Left cardiac atrium (tissue), 4 donors: ENCODE measurements at regions of chr1 and their contacts with region 1.

Region 1: DNA sequence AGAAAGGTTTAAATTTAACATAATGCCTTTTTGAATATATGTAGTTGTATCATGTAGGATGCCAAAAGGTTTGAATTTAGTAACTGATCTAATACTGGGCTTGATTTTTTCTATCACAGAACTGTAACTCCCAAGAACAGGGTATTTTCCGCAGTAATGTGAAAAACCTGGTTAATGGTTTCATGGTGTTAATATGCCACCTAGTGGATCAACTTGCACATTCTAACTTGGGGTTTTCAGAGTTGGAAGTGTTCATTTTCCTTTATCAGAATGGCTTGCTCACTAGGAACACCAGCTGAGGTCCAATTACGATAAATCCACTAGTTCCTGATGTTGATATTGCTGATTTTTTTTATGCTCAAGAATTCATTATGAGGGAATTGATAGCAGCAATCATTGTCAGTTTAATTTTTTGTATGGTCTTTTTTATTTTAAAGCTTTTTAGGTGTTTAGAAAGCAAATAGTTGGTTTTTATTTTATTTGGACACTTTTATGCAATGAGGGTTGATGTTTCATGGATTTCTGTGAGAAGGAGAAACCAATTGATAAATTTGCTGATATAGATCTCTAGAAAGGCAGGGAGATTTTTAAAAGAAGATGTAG is 157.2 kb downstream of the PLA2G4A start:
- DNase-seq: no peak
- ATAC-seq: peak; percentile 69 to 74

Region 2: DNA sequence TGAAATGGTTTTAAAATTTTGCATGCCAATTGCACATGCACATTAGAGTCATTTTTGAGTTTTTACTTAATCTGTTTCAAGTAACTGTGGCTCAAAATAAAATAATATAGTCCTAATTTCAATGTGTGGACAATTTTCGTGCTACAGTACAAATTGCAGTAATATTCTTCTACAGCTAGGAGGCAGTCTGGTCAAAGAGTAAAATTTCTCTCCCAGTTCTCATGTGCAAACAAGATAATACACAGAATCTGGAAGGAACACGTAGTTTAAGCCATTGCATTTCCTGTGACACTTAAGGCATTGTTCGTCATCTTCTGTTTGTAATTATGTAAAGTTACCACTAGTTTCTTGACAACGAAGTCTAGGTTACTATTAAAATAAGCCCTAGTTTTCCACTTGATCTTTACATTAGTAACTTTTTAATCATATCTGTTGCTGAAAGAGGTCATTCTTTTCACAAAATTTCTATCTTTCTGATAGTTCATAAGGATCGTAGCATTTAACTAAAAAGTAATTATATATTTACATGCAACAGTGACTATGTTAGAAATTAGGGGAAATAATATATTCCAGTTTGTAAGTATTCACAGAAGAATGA is 581.4 kb before region 1 on chr1:
- intact Hi-C with region 1: loop called in 1 of 2 experiments (anchors 5 kb)
- DNase-seq: no peak
- ATAC-seq: peak in 1 of 2 donors; percentile 29

Region 3: GRCh38 chr1:186482661-186483255 is 503.2 kb before region 1 on chr1:
- intact Hi-C with region 1: loop called in 1 of 2 experiments (anchors 2 kb)
- DNase-seq: peak; percentile 39
- ATAC-seq: peak in 1 of 2 donors; percentile 75

Region 4: GRCh38 chr1:186605762-186606350 is 380.1 kb before region 1 on chr1:
- intact Hi-C with region 1: loop called (anchors 2 to 5 kb)
- DNase-seq: peak; percentile 36
- ATAC-seq: peak; percentile 67